ENCODE measurements at regions of chr1 and their contacts with region 1.

Region 1: DNA sequence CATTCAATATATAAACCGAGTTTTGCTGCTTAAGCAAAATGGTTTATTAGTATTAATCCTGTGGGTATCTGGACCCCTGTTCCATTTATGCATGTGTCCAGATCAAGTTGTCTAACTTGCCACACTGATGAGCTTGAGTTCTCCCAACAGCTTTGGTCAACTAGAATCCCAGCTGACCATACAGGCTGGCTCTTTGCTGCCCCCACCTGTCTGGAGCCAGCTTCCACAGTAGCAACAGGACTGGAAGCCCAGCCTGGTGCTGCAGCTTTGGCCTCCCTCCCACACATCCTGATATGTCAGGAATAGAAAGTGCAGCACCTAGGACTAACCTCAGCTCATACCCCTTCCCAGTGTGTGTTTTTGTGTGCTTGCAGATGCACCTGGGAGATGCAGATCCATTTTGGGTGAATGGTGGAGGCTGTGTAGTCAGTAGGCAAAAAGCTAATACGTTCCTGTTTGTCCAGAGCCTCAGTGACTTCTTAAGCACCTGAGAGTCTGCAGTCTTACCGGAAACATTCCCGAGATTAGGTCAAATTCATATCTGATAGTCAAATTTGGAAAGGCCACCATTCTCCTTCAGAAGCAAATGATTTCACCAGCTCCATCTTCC is 40.9 kb upstream of the BEND5 start:
- DNase-seq: peak; percentile 73
- ATAC-seq: peak; percentile 92
- H3K4me3 ChIP-seq: no peak overlapping the region
- H3K27ac ChIP-seq: no peak overlapping the region
- H3K4me1 ChIP-seq: no peaks in the 10 kb centered on the region
- H3K27me3 ChIP-seq: no peaks in the 10 kb centered on the region
- CTCF ChIP-seq: peak; percentile 91

Region 2: GRCh38 chr1:48572646-48573261 is 244.9 kb before region 1 on chr1:
- CTCF ChIA-PET with region 1: interaction called, 10 read pairs
- POLR2A ChIA-PET with region 1: no interaction called
- intact Hi-C with region 1: loop called (anchors 2 kb)
- DNase-seq: peak; percentile 62
- ATAC-seq: peak; percentile 94
- H3K4me3 ChIP-seq: no peak overlapping the region
- H3K27ac ChIP-seq: no peak overlapping the region
- H3K4me1 ChIP-seq: no peaks in the 10 kb centered on the region
- H3K27me3 ChIP-seq: 0 out of 2 replicates have a peak, but pooled peaks cover 17% of the 10 kb centered on the region
- CTCF ChIP-seq: peak; percentile 82

Region 3: GRCh38 chr1:48697066-48697707 is 120.4 kb before region 1 on chr1:
- CTCF ChIA-PET with region 1: no interaction called
- POLR2A ChIA-PET with region 1: no interaction called
- intact Hi-C with region 1: loop called (anchors 5 kb)
- DNase-seq: peak; percentile 72
- ATAC-seq: peak; percentile 64; the same call in 1 of the 2 replicates
- H3K4me3 ChIP-seq: no peak overlapping the region
- H3K27ac ChIP-seq: no peak overlapping the region
- H3K4me1 ChIP-seq: peaks cover 8% of the 10 kb centered on the region
- H3K27me3 ChIP-seq: peaks cover 13% of the 10 kb centered on the region
- CTCF ChIP-seq: peak; percentile 92